ENCODE measurements at regions of chr2 and their contacts with region 1.

Region 1: DNA sequence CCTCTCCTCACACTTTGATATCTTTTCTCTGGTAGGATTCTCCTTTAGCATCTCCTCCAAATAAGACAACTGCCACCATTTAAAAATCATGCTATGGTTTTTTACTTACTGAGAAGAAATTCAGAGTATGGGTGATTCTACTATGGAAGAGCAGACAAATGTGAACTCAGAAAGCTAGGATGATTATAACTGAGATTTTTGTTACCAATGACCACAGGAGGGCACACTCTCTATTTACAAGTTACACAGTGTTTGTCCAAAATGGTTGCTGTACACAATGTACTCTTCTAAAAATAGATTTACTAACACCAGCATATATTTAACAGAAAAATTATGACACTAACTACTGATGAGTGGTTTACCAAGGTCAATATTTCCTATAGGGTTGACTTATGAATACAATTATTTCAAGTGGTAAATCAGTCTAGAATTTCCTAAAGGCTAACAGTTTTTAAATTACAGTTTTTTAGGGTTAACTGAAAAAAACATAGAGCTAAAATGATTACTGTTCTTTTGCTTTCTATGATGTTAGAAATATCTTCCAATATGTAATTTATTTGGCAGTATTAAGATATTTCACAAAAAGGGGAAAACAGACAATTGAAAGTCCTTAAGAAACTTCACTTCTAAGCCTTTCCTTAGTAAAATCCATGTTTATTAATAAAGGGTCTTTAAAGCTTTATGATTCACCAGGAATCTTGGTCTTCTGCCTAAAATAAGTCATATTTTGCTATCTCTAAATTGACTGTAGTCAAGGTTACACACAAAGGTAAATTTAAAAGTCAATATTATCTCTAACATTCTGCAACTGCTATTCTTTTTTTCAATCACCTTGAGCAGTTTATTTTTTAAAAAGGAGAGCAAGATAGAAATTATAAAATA is 57.2 kb downstream of the MAP4K3 start:
- DNase-seq: peak in 3 of 14 experiments; percentile 30 to 46 (median 45)
- ATAC-seq: peak; percentile 44
- H3K4me3 ChIP-seq: no peak overlapping the region
- H3K4me3 Mint-ChIP-seq: no peak overlapping the region
- H3K27ac ChIP-seq: no peak overlapping the region
- H3K27ac Mint-ChIP-seq: no peak overlapping the region
- H3K4me1 ChIP-seq: no peaks in the 10 kb centered on the region
- H3K4me1 Mint-ChIP-seq: peaks cover 28% of the 10 kb centered on the region
- H3K27me3 ChIP-seq: no peaks in the 10 kb centered on the region
- H3K27me3 Mint-ChIP-seq: no peaks in the 10 kb centered on the region
- CTCF ChIP-seq: peak; percentile 50

Region 2: DNA sequence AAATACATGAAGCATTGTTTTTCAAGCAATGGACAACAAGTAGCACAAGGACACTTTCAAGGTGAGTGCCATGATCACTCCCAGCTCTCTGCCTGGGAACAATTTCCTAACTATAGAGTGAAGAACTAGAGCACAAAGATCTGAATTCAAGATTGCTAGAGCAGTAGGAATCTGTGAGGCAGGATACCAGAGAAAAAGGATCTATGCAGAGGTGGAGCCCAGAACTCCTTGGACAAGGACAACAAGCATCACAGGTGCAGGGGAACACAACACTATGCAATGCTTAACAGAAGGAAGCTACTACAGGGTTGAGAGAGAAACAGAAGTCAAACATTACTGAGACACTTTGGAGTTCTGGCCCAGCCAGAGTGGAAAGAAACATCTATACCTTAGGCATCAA is 1027.5 kb before region 1 on chr2:
- CTCF ChIA-PET with region 1: no interaction called
- POLR2A ChIA-PET with region 1: no interaction called
- intact Hi-C with region 1: no loop called
- DNase-seq: no peak
- ATAC-seq: no peak
- H3K4me3 ChIP-seq: no peak overlapping the region
- H3K4me3 Mint-ChIP-seq: no peak overlapping the region
- H3K27ac ChIP-seq: no peak overlapping the region
- H3K27ac Mint-ChIP-seq: no peak overlapping the region
- H3K4me1 ChIP-seq: no peaks in the 10 kb centered on the region
- H3K4me1 Mint-ChIP-seq: peaks cover 36% of the 10 kb centered on the region
- H3K27me3 ChIP-seq: no peaks in the 10 kb centered on the region
- H3K27me3 Mint-ChIP-seq: no peaks in the 10 kb centered on the region
- CTCF ChIP-seq: no peak

Region 3: DNA sequence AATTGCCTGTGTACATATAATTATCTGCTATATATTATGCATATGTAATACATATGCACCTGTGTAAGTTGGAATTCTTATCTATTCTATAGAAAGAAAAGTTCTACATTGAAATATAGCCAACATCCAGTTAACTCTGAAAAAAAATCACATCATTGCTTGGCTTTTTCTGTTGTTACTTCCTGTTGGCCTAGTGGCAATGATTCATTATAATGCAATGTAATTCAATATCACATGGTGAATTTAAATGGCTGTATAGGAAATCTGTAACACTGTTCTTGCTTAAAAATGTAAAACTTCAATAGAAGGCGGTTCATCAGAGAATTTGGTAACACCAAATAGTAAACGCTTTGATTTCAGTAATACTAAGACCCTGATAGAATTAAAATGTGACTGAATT is 101.7 kb after region 1 on chr2:
- CTCF ChIA-PET with region 1: no interaction called
- POLR2A ChIA-PET with region 1: no interaction called
- intact Hi-C with region 1: no loop called
- DNase-seq: no peak
- ATAC-seq: no peak
- H3K4me3 ChIP-seq: no peak overlapping the region
- H3K4me3 Mint-ChIP-seq: no peak overlapping the region
- H3K27ac ChIP-seq: no peak overlapping the region
- H3K27ac Mint-ChIP-seq: no peak overlapping the region
- H3K4me1 ChIP-seq: no peaks in the 10 kb centered on the region
- H3K4me1 Mint-ChIP-seq: no peaks in the 10 kb centered on the region
- H3K27me3 ChIP-seq: no peaks in the 10 kb centered on the region
- H3K27me3 Mint-ChIP-seq: no peaks in the 10 kb centered on the region
- CTCF ChIP-seq: no peak

Region 4: DNA sequence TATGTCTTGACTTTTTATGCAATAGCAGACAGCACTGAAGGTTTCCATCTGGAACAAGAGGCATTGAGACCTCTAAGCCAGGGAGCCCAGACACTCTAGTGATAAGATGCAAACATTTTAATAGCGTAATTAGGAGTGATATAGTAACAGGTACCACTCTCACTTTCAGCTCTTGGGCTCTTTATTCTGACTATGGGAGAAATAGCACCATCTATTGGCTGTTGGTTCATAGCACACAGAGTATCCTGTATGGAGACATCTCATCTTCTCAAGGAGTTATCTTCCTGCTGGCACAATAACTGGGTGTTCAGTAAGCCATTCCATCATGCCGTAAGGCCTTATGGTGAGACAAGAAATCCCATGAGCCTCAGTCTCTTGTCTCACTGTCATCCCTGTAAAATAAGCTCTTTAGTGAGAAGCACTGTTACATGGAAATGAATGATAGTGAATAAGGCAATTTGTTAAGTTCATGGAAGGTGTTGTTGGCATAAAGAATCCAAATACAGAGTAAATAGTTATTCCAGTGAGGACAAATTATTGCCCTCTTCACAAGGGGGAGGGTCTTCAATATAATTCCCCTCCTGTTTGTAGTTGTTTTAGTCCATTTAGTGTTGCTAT is 350.9 kb after region 1 on chr2:
- CTCF ChIA-PET with region 1: no interaction called
- POLR2A ChIA-PET with region 1: no interaction called
- intact Hi-C with region 1: loop called in 1 of 2 experiments (anchors 2 kb)
- DNase-seq: peak in 2 of 14 experiments; percentile 4 to 13
- ATAC-seq: no peak
- H3K4me3 ChIP-seq: no peak overlapping the region
- H3K4me3 Mint-ChIP-seq: no peak overlapping the region
- H3K27ac ChIP-seq: no peak overlapping the region
- H3K27ac Mint-ChIP-seq: no peak overlapping the region
- H3K4me1 ChIP-seq: no peaks in the 10 kb centered on the region
- H3K4me1 Mint-ChIP-seq: no peaks in the 10 kb centered on the region
- H3K27me3 ChIP-seq: no peaks in the 10 kb centered on the region
- H3K27me3 Mint-ChIP-seq: no peaks in the 10 kb centered on the region
- CTCF ChIP-seq: peak; percentile 42

Measured in CD4-positive, alpha-beta T cell (primary cell).